Ascending aorta (tissue), 2 donors: ENCODE measurements at regions of chr11 and their contacts with region 1.

Region 1: GRCh38 chr11:74671520-74672196 is 59.6 kb downstream of the CHRDL2 start:
- DNase-seq: no peak
- H3K4me3 ChIP-seq: no peak overlapping the region
- H3K27ac ChIP-seq: peak overlapping the region in 1 of 2 donors; percentile 56
- H3K4me1 ChIP-seq: peaks cover 4 to 15% of the 10 kb centered on the region in 2 donors
- H3K27me3 ChIP-seq: no peaks in the 10 kb centered on the region
- CTCF ChIP-seq: no peak

Region 2: GRCh38 chr11:74696932-74697687 is 25.5 kb after region 1 on chr11:
- intact Hi-C with region 1: loop called (anchors 1 kb)
- DNase-seq: peak; percentile 51 to 91
- H3K4me3 ChIP-seq: peak overlapping the region; percentile 17 to 46
- H3K27ac ChIP-seq: peak overlapping the region; percentile 74 to 75
- H3K4me1 ChIP-seq: peaks cover 4 to 8% of the 10 kb centered on the region in 2 donors
- H3K27me3 ChIP-seq: no peaks in the 10 kb centered on the region
- CTCF ChIP-seq: no peak